AG04449 (cell line): ENCODE measurements at regions of chr11 and their contacts with region 1.

Region 1: GRCh38 chr11:67630228-67630942 is 648 bp upstream of the NUDT8 start:
- DNase-seq: peak; percentile 38
- H3K4me3 ChIP-seq: peak overlapping the region; percentile 79
- CTCF ChIP-seq: peak; percentile 83

Region 2: DNA sequence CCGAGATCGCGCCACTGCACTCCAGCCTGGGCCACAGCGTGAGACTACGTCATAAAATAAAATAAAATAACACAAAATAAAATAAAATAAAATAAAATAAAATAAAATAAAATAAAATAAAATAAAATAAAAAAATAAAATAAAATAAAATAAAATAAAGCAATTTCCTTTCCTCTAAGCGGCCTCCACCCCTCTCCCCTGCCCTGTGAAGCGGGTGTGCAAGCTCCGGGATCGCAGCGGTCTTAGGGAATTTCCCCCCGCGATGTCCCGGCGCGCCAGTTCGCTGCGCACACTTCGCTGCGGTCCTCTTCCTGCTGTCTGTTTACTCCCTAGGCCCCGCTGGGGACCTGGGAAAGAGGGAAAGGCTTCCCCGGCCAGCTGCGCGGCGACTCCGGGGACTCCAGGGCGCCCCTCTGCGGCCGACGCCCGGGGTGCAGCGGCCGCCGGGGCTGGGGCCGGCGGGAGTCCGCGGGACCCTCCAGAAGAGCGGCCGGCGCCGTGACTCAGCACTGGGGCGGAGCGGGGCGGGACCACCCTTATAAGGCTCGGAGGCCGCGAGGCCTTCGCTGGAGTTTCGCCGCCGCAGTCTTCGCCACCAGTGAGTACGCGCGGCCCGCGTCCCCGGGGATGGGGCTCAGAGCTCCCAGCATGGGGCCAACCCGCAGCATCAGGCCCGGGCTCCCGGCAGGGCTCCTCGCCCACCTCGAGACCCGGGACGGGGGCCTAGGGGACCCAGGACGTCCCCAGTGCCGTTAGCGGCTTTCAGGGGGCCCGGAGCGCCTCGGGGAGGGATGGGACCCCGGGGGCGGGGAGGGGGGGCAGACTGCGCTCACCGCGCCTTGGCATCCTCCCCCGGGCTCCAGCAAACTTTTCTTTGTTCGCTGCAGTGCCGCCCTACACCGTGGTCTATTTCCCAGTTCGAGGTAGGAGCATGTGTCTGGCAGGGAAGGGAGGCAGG is 46.9 kb before region 1 on chr11 and contains the start of gene GSTP1:
- CTCF ChIA-PET with region 1: interaction called, 22 read pairs
- POLR2A ChIA-PET with region 1: no interaction called
- DNase-seq: peak; percentile 33
- H3K4me3 ChIP-seq: peak within 1 kb of the TSS; percentile 79
- CTCF ChIP-seq: peak; percentile 64

Region 3: DNA sequence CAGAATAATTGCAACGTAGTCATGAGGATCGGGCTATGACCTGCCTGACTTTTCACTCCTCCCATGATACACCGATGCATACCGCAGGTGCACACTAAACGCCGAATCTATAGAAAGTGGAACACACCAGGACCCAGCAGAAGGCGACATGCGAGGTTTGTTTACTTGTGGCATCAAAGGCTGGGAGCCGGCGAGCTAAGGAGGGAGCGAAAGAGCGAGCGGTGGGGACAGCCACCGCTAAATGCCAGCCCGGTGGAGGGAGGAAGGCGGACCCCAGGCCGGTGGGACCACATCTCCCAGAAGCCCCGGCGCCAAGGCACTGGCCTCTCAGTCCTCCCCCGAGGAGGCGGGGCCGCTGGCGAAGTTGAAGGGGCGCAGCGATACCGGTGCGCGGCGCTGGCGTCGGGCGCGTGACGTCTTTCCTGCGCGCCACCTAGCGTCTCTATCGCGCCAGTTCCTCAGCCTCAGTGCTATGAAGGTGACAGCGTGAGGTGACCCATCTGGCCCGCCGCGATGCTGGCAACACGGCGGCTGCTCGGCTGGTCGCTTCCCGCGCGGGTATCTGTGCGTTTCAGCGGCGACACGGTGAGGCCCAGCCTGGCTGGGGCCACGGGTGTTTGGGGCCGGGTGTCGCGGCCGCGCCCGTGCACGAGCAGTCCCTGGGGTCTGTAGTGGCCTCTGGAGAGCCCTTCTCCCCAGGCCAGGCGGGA is 23.7 kb before region 1 on chr11 and contains the start of gene NDUFV1:
- CTCF ChIA-PET with region 1: interaction called, 104 read pairs
- POLR2A ChIA-PET with region 1: no interaction called
- DNase-seq: no peak
- H3K4me3 ChIP-seq: peak within 1 kb of the TSS; percentile 91
- CTCF ChIP-seq: peak; percentile 83

Region 4: DNA sequence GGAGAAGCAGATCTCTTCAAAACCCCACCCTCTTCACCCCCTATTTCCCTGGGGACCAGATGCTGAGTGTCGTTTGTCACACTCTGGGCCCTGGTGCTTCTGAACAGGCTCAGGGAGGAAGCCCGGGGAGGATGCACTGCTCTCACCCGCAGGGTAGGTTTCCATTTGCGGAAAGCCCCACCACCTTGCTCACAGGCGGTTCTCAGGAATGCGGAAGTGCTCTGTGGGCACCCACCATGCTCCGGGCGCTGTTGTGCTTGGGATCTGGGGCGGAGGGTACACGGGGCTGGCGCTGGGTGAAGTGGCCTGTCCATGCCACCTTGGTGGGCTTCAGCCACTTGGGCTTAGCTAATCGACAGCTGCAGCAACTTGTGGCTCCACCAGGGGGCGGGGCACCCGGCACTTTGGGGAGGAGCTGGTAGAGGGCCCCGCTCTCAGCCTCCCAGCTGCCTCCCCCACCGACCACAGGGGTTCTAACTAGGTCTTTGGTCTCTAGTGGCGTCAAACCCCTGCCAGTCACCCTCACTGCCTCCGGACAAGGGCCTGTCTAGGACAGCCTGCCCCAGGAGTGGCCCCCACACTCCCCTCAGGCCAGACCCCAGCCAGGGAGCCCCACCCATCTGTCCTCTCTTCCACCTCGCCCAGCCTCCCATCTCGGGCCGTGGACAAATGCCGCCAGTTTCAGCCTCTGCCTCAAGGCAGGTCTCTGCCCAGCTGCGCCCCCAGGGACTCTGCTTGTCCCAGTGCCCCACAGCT is 16.2 kb before region 1 on chr11:
- CTCF ChIA-PET with region 1: interaction called, 104 read pairs
- POLR2A ChIA-PET with region 1: no interaction called
- DNase-seq: no peak
- H3K4me3 ChIP-seq: peak overlapping the region; percentile 32; the same call in 1 of the 2 replicates
- CTCF ChIP-seq: peak; percentile 81

Region 5: GRCh38 chr11:67648140-67649123 is 18.0 kb after region 1 on chr11:
- CTCF ChIA-PET with region 1: interaction called, 24 read pairs
- POLR2A ChIA-PET with region 1: no interaction called
- DNase-seq: no peak
- H3K4me3 ChIP-seq: no peak overlapping the region
- CTCF ChIP-seq: peak; percentile 35

Region 6: GRCh38 chr11:67656278-67656922 is 26.0 kb after region 1 on chr11:
- CTCF ChIA-PET with region 1: interaction called, 101 read pairs
- POLR2A ChIA-PET with region 1: no interaction called
- DNase-seq: no peak
- H3K4me3 ChIP-seq: no peak overlapping the region
- CTCF ChIP-seq: no peak

Region 7: GRCh38 chr11:67691149-67691548 is 60.8 kb after region 1 on chr11:
- CTCF ChIA-PET with region 1: interaction called, 19 read pairs
- POLR2A ChIA-PET with region 1: interaction called, 3 read pairs
- DNase-seq: no peak
- H3K4me3 ChIP-seq: no peak overlapping the region
- CTCF ChIP-seq: no peak